A673 (cell line): ENCODE measurements at regions of chr18 and their contacts with region 1.

Region 1: DNA sequence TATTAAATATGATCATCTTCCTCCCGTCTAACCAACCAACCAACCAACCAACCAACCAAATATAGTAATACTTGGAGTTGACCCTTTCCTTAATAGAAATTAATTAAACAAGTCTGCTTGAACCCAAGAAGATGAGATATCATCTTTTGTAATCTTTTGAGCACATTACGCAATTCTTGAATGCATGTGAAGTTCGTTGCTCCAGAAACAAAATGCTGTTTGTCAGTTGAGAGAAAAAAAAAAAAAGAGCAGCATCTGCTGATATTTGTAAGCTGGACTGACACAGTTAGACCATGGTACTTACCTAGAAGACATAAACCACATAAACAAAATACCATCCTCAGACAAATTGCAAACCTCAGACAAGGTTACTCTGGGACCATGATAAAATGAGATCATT is 9.2 kb upstream of the SERPINB2 start:
- DNase-seq: peak; percentile 10
- H3K4me3 ChIP-seq: no peak overlapping the region
- H3K27ac ChIP-seq: no peak overlapping the region
- H3K4me1 ChIP-seq: peaks cover 6% of the 10 kb centered on the region
- H3K27me3 ChIP-seq: no peaks in the 10 kb centered on the region
- CTCF ChIP-seq: no peak

Region 2: DNA sequence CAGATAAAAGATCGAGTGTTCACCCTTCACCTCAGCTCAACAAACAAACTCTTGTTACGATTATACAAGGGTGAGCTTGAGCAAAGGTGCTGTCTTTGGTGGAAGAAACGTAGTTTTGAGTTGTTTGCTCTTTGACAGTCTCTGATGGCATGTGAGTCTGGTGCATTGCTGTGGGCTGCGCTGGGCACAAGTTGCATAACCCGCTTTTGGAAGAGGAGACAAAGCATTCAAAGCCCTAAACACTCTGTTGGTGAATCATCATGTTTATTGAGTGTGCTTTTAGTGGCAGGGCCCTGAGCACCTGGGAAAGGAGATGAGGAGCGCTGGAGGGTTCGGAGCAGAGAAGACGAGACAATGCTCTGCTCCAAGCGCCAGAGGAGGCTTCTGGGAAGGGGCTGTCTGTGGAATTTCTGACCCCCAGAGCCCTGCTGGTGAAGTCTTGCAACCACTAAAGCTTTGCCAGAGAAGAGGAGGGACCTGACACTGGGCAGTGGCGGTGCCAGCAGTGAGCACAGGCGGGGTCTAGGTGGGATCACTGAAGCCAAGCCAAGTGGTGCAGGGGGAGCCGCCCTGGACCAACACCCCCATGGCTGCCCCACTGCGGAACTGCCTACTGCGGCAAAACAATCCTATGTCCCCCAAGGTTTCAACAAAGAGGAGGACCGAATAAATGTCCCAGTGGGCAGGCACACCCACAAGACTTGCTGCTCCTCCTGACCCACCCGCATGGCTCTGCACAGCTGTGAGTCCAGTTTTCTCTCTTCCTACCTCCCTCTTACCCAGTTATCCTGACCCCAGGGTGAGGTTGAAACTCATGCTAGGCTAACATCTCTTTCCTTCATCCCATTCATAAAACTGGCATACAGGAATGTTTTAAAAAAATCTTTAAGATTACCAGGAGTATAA is 1489.2 kb before region 1 on chr18:
- CTCF ChIA-PET with region 1: no interaction called
- POLR2A ChIA-PET with region 1: interaction called, 11 read pairs
- intact Hi-C with region 1: no loop called
- DNase-seq: no peak
- H3K4me3 ChIP-seq: no peak overlapping the region
- H3K27ac ChIP-seq: no peak overlapping the region
- H3K4me1 ChIP-seq: peaks cover 8% of the 10 kb centered on the region
- H3K27me3 ChIP-seq: no peaks in the 10 kb centered on the region
- CTCF ChIP-seq: no peak

Region 3: GRCh38 chr18:63439334-63439733 is 439.0 kb before region 1 on chr18:
- CTCF ChIA-PET with region 1: no interaction called
- POLR2A ChIA-PET with region 1: no interaction called
- intact Hi-C with region 1: no loop called
- DNase-seq: peak; percentile 87
- H3K4me3 ChIP-seq: no peak overlapping the region
- H3K27ac ChIP-seq: peak overlapping the region; percentile 71
- H3K4me1 ChIP-seq: peaks cover 19% of the 10 kb centered on the region
- H3K27me3 ChIP-seq: no peaks in the 10 kb centered on the region
- CTCF ChIP-seq: peak; percentile 87